HCT116 (cell line): ENCODE measurements at regions of chr2 and their contacts with region 1.

Region 1: DNA sequence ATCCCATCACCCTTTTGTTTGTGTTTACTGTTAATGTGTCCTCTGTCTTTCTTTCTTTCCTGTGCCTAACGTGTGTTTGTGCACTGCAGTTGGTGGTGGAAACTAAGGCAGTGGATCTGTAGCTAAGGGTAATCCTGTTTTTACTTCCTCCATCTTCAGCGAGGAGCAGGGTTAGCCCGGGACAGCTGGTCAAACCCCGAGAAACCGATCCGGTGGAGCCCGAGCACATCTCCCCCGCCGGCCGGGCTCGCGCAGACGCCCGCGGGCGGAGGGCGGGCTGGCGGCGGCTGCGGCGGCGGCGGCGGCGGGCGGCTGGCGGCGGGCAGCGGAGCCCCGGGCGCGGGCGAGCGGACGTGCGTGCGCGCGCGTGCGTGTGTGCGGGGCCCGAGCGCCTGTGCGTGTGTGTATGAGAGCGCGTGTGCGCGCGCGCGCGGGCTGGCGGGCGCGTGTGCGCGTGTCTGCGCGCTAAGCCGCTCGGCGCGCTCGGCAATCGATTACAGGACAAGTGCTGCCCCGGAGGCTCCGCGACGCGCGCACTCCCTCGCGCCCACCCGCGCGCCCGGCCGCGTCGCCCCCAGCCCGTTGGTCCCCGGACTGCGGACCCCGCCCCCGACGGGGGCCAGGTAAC is at the start of gene IKZF2:
- DNase-seq: peak; percentile 60
- ATAC-seq: peak; percentile 91
- H3K4me3 ChIP-seq: peak within 1 kb of the TSS; percentile 62 to 63
- H3K27ac ChIP-seq: no peak within 1 kb of the TSS; the same call in 1 of the 2 replicates
- H3K4me1 ChIP-seq: peaks cover 0 to 13% of the 10 kb centered on the region in 2 experiments; a peak in 3 of 4 replicates
- H3K27me3 ChIP-seq: no peaks in the 10 kb centered on the region
- CTCF ChIP-seq: no peak
- POLR2A ChIP-seq: no peak
- RAD21 ChIP-seq: no peak
- total RNA-seq, gene IKZF2: 1.6 TPM

Region 2: DNA sequence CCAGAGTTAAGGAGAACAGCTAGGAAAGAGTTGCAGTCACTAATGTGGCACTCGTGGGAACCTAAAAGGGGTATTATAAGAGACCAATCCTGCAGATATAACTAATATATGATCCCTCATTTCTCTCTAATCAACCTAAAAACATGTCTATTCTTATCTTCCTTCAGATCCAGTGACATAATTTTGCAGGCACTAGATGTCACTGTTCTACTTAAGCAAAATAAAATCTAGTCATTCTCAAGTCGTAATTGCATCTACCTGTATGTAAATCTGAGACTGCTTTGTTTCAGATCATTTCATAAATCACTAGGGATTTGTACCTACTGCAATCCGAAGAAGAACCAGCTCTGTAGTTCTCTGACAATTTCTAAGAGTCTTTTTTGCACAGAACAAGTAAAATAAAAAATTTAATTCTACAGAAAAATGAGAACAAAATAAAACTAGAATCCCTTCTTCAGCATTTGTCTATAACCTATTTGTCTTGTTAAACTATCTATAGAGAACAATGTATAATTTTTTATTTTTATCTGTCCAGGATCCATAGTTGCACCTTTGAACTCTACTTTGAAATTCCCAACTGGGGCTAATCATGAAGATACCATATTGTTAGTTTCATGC is 556.4 kb before region 1 on chr2:
- CTCF ChIA-PET with region 1: no interaction called
- POLR2A ChIA-PET with region 1: no interaction called
- RAD21 ChIA-PET with region 1: no interaction called
- intact Hi-C with region 1: loop called (anchors 2 kb)
- DNase-seq: peak; percentile 32
- ATAC-seq: peak; percentile 78
- H3K4me3 ChIP-seq: no peak overlapping the region
- H3K27ac ChIP-seq: no peak overlapping the region
- H3K4me1 ChIP-seq: no peaks in the 10 kb centered on the region
- H3K27me3 ChIP-seq: no peaks in the 10 kb centered on the region
- CTCF ChIP-seq: peak; percentile 27 to 58 (median 36); a peak in 4 of 6 replicates
- POLR2A ChIP-seq: no peak
- RAD21 ChIP-seq: peak; percentile 64

Region 3: GRCh38 chr2:212686285-212686895 is 465.2 kb before region 1 on chr2:
- CTCF ChIA-PET with region 1: interaction called, 4 read pairs
- POLR2A ChIA-PET with region 1: no interaction called
- RAD21 ChIA-PET with region 1: no interaction called
- intact Hi-C with region 1: loop called (anchors 1 kb)
- DNase-seq: peak; percentile 44
- ATAC-seq: peak; percentile 61
- H3K4me3 ChIP-seq: no peak overlapping the region
- H3K27ac ChIP-seq: no peak overlapping the region
- H3K4me1 ChIP-seq: no peaks in the 10 kb centered on the region
- H3K27me3 ChIP-seq: no peaks in the 10 kb centered on the region
- CTCF ChIP-seq: peak; percentile 72 to 84 (median 79)
- POLR2A ChIP-seq: no peak
- RAD21 ChIP-seq: peak; percentile 90

Region 4: DNA sequence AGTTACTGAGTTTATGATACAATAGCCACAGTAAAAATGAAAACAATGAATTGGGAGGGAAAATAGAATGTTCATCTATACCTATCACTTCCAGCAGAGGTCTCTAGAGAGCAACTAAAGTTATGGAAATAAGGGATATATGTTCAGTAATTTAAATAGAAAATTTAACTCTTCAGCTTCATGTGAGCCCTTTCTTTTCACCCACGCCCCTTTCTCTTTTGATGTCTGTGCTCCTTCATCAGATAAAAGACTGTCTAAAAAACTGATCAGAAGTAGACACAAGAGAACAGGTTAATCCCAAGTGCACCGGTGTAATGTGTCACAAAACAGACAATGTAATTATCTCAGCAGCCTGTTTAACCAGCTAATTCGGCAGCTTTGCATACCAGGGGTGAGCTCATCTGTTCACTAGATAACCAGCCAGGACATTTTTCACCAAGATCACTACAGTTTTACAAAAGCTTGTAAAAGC is 374.5 kb before region 1 on chr2:
- CTCF ChIA-PET with region 1: interaction called, 10 read pairs
- POLR2A ChIA-PET with region 1: no interaction called
- RAD21 ChIA-PET with region 1: no interaction called
- intact Hi-C with region 1: loop called (anchors 1 kb)
- DNase-seq: peak; percentile 6
- ATAC-seq: peak; percentile 63
- H3K4me3 ChIP-seq: no peak overlapping the region
- H3K27ac ChIP-seq: no peak overlapping the region
- H3K4me1 ChIP-seq: no peaks in the 10 kb centered on the region
- H3K27me3 ChIP-seq: no peaks in the 10 kb centered on the region
- CTCF ChIP-seq: peak; percentile 38 to 59 (median 40); a peak in 5 of 6 replicates
- POLR2A ChIP-seq: no peak
- RAD21 ChIP-seq: peak; percentile 58

Region 5: GRCh38 chr2:212863185-212863588 is 288.4 kb before region 1 on chr2:
- CTCF ChIA-PET with region 1: no interaction called
- POLR2A ChIA-PET with region 1: no interaction called
- RAD21 ChIA-PET with region 1: no interaction called
- intact Hi-C with region 1: loop called (anchors 2 kb)
- DNase-seq: peak; percentile 47
- ATAC-seq: peak; percentile 81
- H3K4me3 ChIP-seq: no peak overlapping the region
- H3K27ac ChIP-seq: no peak overlapping the region
- H3K4me1 ChIP-seq: no peaks in the 10 kb centered on the region
- H3K27me3 ChIP-seq: no peaks in the 10 kb centered on the region
- CTCF ChIP-seq: peak; percentile 53 to 91 (median 75); a peak in 5 of 6 replicates
- POLR2A ChIP-seq: no peak
- RAD21 ChIP-seq: peak; percentile 80

Region 6: DNA sequence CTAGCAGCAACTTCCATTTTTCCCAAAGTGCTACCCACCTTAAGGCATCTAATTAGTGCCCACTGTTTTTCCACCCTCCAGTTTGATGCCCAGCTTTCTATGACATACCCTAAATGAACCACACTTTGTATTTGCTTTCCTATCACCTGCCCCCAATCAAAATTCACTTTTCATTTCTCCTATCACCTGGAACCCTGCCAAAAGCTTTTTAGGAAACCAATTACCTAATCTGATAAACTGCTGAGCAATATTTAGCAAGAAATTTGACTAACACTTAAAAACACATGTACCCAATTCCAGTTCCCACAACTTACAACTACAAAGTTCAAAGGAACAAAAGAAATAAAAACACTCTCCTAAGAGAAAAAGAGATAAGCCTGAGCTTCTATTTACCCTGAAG is 71.8 kb before region 1 on chr2:
- CTCF ChIA-PET with region 1: no interaction called
- POLR2A ChIA-PET with region 1: no interaction called
- RAD21 ChIA-PET with region 1: no interaction called
- intact Hi-C with region 1: no loop called
- DNase-seq: no peak
- ATAC-seq: no peak
- H3K4me3 ChIP-seq: no peak overlapping the region
- H3K27ac ChIP-seq: no peak overlapping the region
- H3K4me1 ChIP-seq: no peaks in the 10 kb centered on the region
- H3K27me3 ChIP-seq: no peaks in the 10 kb centered on the region
- CTCF ChIP-seq: no peak
- POLR2A ChIP-seq: no peak
- RAD21 ChIP-seq: no peak

Region 7: DNA sequence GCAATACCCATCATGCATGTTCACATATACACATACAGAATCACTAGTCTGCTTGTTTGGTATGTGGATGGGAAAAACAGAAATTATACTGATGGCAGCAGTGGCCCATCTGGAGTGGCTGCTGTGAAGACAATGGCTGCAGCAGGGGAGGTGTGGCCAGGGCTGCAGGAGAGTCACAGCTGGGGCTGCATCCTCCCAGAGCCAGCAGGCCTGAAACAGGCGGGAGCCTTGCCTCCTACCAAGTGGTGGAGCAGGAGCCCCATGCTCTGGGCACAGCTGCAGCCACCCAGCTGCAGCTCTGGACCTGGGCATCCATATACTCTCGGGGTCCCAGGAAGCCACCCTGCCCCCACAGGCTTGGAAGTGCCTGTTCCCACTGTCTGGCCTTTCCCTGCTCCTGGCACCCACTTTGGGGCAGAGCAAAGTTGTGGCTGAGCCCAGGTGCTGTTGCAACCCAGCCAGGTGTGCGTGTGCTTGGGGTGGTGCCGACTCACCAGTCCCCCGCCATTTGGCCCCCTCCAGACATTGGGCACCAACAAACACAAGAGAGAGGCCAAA is 269.4 kb after region 1 on chr2:
- CTCF ChIA-PET with region 1: no interaction called
- POLR2A ChIA-PET with region 1: no interaction called
- RAD21 ChIA-PET with region 1: no interaction called
- intact Hi-C with region 1: no loop called
- DNase-seq: no peak
- ATAC-seq: no peak
- H3K4me3 ChIP-seq: no peak overlapping the region
- H3K27ac ChIP-seq: no peak overlapping the region
- H3K4me1 ChIP-seq: no peaks in the 10 kb centered on the region
- H3K27me3 ChIP-seq: no peaks in the 10 kb centered on the region
- CTCF ChIP-seq: no peak
- POLR2A ChIP-seq: no peak
- RAD21 ChIP-seq: no peak